AG04449 (cell line): ENCODE measurements at regions of chr1 and their contacts with region 1.

Region 1: GRCh38 chr1:155084722-155085503 is 6.3 kb downstream of the EFNA3 start:
- DNase-seq: peak; percentile 41
- H3K4me3 ChIP-seq: peak overlapping the region; percentile 89
- CTCF ChIP-seq: peak; percentile 97

Region 2: DNA sequence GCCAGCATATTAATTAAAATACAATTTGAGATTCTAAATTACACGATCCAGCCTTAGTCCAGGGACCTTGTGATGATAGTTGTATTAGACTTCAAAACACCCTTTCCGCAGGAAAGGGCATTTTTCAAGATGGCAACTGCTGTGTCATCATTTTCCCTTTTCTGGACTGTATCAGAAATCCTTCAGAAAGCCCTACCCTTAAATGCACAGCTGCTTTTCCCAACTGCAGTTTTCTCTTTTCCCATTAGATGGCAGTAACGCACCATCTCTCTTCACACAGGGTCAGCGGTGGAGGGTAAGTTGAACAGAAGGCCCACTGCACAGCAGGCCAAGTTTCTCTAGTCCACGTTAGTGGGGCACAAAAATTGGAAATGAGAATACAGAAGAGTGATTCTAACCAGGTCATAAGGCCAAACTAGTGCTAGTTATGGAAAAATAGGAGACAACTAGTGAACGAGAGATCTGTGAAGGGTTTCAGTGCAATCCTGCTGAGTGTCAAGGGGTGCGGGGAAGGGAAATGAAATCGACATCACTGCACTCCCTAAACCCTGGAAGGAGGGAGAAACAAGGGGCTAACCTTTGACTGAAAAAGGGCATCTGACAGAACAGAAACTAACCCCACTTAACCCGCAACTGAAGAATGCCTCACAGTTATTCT is 605.0 kb before region 1 on chr1:
- CTCF ChIA-PET with region 1: interaction called, 17 read pairs
- POLR2A ChIA-PET with region 1: no interaction called
- DNase-seq: no peak
- H3K4me3 ChIP-seq: no peak overlapping the region
- CTCF ChIP-seq: peak; percentile 79

Region 3: DNA sequence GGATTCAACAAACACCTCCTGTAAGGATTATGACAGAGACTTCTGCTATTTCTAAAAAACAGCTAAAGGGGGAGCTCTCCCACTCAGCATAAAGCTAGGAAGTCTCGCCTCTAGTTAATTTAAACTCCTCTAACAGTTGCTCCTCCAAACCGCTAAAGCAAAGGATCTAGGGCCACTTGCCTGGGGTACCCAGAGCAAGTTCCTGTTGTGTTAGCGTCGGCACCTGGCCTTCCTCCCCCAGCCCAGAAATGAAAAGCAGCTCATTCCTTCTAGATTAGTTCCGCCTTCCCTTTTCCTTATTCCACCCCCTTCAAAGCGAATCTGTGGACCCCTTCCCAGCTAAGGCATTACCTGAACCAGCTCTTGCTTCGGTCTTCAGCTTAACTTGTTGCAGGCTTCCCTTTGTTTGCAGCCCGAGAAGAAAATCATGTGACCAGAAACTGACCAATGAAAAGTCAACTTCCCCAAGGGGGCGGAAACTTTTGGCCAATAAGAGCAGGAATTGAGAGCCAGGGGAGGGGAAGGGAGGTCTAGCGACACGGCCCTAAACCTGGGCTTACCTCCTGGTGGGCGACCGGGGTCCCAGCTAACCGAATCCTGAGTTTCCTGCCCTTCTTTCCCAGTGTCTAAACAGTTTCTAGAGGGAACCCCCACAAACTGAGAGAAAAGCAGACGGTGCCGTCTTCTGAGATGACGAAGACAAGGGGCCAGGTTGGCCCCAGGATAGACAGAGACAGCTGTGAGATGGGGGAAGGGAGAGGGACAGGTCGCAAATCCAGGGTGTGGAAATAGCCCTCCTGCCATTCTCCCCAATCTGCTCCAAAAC is 129.0 kb before region 1 on chr1 and contains the start of gene PBXIP1:
- CTCF ChIA-PET with region 1: interaction called, 11 read pairs
- POLR2A ChIA-PET with region 1: interaction called, 3 read pairs
- DNase-seq: peak; percentile 50
- H3K4me3 ChIP-seq: peak within 1 kb of the TSS; percentile 66
- CTCF ChIP-seq: peak; percentile 31

Region 4: DNA sequence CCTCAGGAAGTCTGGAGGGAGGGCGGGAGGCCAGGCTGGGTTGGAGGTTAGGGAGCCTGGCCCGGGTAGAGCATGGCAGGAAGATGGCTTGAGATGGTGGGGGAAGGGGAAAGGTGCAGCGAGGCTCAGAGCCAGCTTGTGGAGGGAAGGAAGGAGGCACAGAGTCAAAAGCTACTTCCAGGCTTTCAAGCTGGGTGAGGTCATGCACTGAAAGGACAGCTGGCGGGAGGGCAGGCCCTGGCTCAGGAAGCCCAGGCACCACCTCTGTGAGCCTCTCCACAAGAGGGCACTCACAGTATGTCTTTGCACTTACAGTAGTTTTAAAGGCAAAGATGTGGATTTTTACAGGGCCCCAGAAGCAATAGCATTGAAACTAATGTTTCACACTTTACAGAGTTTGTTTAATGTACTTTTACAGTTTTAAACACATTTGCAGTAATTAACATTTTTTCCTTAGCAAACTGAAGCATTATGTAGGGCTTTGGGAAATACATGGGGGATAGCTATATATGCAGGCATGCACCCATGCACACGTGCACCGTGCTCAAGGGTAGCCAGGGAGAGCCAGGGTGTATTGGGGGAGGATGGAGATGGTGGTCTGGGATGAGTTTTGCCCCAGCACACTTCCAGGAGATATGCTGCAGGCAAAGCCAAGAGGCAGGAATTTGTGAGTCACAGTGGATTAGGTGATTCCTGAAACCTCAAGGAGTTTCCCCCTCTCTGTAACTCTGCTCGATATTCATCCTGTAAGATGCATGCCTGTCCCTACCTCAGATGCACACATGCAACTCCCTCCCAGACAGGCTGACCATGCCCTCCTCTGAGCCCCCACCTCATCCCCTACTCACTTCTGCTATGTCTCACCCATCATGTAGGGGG is 39.9 kb before region 1 on chr1:
- CTCF ChIA-PET with region 1: interaction called, 67 read pairs
- POLR2A ChIA-PET with region 1: interaction called, 6 read pairs
- DNase-seq: no peak
- H3K4me3 ChIP-seq: no peak overlapping the region
- CTCF ChIP-seq: peak; percentile 75

Region 5: DNA sequence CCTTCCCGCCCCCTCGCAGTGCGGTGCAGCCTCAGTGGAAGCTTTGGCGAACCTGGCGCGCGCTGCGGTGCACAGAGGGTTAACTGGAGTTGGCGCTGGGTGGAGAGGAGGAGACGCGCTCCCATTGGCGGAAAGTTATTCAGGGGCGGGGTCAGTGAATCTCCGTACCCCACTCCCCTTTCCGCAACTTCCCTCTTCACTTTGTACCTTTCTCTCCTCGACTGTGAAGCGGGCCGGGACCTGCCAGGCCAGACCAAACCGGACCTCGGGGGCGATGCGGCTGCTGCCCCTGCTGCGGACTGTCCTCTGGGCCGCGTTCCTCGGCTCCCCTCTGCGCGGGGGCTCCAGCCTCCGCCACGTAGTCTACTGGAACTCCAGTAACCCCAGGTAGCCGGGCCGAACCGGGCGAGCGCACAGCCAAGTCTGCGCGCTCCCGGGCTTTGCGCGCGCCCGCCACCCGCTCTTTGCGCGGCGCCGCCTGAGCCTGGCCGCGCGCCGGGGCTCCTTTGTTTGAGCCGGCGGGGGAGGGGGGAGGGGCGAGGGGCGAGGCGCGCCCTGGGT is 21.3 kb before region 1 on chr1 and contains the start of gene EFNA4:
- CTCF ChIA-PET with region 1: interaction called, 212 read pairs
- POLR2A ChIA-PET with region 1: no interaction called
- DNase-seq: no peak
- H3K4me3 ChIP-seq: peak within 1 kb of the TSS; percentile 96
- CTCF ChIP-seq: no peak

Region 6: GRCh38 chr1:155135415-155136028 is 50.6 kb after region 1 on chr1 and contains the start of gene SLC50A1:
- CTCF ChIA-PET with region 1: interaction called, 35 read pairs
- POLR2A ChIA-PET with region 1: no interaction called
- DNase-seq: peak; percentile 46
- H3K4me3 ChIP-seq: peak within 1 kb of the TSS; percentile 94
- CTCF ChIP-seq: no peak